Mammary epithelial cell (primary cell): ENCODE measurements at regions of chr5 and their contacts with region 1.

Region 1: GRCh38 chr5:52989781-52990527 is 802 bp downstream of the ITGA2 start:
- DNase-seq: no peak
- H3K4me3 ChIP-seq: peak overlapping the region; percentile 69 to 95 (median 88)
- H3K27ac ChIP-seq: peak overlapping the region; percentile 95
- H3K4me1 ChIP-seq: peaks cover 65% of the 10 kb centered on the region
- H3K27me3 ChIP-seq: no peaks in the 10 kb centered on the region
- CTCF ChIP-seq: peak; percentile 29 to 46

Region 2: DNA sequence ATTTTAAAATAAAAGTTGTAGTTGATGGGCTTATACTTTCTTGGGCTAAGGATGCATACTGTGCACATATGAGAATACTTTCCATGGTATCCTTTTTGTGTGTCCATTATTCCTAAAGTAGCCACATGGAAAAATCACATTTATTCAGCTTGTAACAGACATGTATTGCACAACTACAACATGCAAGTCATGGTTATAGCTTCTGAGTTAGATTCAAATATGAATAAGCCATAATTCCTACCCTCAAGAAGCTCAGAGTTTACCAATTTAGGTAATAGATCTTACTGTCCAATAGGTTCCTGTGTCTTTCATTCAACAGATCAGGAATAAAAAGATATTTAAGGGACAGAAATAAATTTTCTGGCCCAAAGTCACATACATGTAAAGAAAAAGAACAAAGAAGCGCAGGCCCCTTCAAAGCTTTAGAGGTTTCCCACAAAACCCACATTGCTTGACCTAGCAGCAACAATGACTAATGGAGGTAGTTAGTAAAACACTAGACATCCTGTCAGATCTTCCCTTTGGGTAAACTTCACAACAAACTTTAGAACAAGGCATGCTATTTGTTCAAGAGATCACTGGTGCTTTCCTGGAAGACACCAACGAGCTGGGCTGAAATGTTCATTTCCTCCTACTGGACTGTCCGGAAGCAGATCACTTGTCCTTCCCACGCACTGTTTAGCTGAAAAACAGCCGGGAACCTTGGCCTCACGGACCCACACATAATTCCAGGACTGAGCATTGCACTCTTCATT is 280.6 kb before region 1 on chr5:
- CTCF ChIA-PET with region 1: no interaction called
- dilution Hi-C with region 1: no loop called
- in situ Hi-C with region 1: no loop called
- intact Hi-C with region 1: no loop called
- DNase-seq: peak; percentile 74
- H3K4me3 ChIP-seq: no peak overlapping the region
- H3K27ac ChIP-seq: no peak overlapping the region
- H3K4me1 ChIP-seq: peaks cover 16% of the 10 kb centered on the region
- H3K27me3 ChIP-seq: no peaks in the 10 kb centered on the region
- CTCF ChIP-seq: no peak

Region 3: DNA sequence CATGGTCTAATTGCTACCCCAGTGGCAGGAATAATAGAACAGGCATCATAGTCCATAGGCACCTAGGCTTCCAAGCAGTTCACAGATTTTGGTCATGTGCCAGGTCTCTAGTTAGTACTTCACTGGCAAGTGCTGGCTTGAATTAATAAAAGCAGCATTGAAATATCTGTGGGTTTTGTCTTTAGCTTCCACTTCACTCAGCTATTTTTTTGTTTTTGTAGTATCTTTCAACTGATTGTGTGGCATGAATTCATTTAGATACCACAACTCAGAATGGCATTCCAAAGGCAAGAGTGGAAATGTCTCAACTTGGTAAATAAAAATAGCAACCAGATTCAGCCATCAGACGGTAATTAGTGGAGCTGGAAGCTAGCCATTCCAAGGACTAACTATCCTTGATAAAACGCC is 28.7 kb before region 1 on chr5:
- CTCF ChIA-PET with region 1: interaction called, 3 read pairs
- dilution Hi-C with region 1: no loop called
- in situ Hi-C with region 1: no loop called
- intact Hi-C with region 1: loop called (anchors 1 kb)
- DNase-seq: peak; percentile 89
- H3K4me3 ChIP-seq: no peak overlapping the region
- H3K27ac ChIP-seq: peak overlapping the region; percentile 68
- H3K4me1 ChIP-seq: peaks cover 35% of the 10 kb centered on the region
- H3K27me3 ChIP-seq: no peaks in the 10 kb centered on the region
- CTCF ChIP-seq: no peak

Region 4: GRCh38 chr5:53006911-53007890 is 17.2 kb after region 1 on chr5:
- CTCF ChIA-PET with region 1: no interaction called
- dilution Hi-C with region 1: no loop called
- in situ Hi-C with region 1: no loop called
- intact Hi-C with region 1: loop called (anchors 1 kb)
- DNase-seq: peak; percentile 71
- H3K4me3 ChIP-seq: peak overlapping the region in 2 of 3 experiments; percentile 1 to 18
- H3K27ac ChIP-seq: peak overlapping the region; percentile 86
- H3K4me1 ChIP-seq: peaks cover 77% of the 10 kb centered on the region
- H3K27me3 ChIP-seq: no peaks in the 10 kb centered on the region
- CTCF ChIP-seq: no peak

Region 5: GRCh38 chr5:53035868-53036381 is 46.0 kb after region 1 on chr5:
- CTCF ChIA-PET with region 1: no interaction called
- dilution Hi-C with region 1: loop called (anchors 5 kb)
- in situ Hi-C with region 1: loop called in 1 of 2 experiments (anchors 5 kb)
- intact Hi-C with region 1: loop called (anchors 1 kb)
- DNase-seq: peak; percentile 96
- H3K4me3 ChIP-seq: no peak overlapping the region
- H3K27ac ChIP-seq: peak overlapping the region; percentile 96
- H3K4me1 ChIP-seq: peaks cover 77% of the 10 kb centered on the region
- H3K27me3 ChIP-seq: no peaks in the 10 kb centered on the region
- CTCF ChIP-seq: peak; percentile 36 to 48

Region 6: DNA sequence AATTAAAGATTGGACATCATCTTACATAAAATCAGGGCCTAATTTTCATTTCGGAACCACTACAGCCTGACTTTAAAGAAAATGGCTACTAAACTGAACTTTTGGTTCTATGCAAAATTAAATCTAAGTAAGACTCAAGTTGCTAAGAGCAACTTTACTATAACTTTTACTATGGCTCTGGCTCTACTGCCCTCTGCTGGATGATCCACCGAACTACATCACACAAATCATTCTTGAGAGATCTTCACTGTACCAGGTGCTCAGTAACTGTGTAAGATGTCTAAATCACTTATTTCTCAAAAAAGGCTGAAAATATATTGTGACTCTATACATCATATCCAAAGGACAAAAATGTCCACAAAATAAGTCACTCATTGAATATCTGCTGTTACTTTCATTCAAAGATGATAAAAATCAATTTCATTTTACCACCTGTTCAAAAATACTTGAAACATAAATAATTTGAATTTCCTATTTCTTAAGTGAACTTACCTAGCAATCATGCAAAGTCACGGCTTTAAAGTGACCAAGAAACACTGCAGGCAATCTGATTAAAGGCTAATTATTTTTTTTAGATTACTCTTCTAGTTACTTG is 106.1 kb after region 1 on chr5:
- CTCF ChIA-PET with region 1: no interaction called
- dilution Hi-C with region 1: no loop called
- in situ Hi-C with region 1: no loop called
- intact Hi-C with region 1: loop called (anchors 1 kb)
- DNase-seq: peak; percentile 37
- H3K4me3 ChIP-seq: no peak overlapping the region
- H3K27ac ChIP-seq: no peak overlapping the region
- H3K4me1 ChIP-seq: no peaks in the 10 kb centered on the region
- H3K27me3 ChIP-seq: no peaks in the 10 kb centered on the region
- CTCF ChIP-seq: peak; percentile 77 to 80